ENCODE measurements at regions of chr14 and their contacts with region 1.

Region 1: GRCh38 chr14:103984196-103984595 is 41.9 kb upstream of the RD3L start:
- DNase-seq: no peak
- H3K4me3 ChIP-seq: no peak overlapping the region
- H3K27ac ChIP-seq: no peak overlapping the region
- H3K4me1 ChIP-seq: no peaks in the 10 kb centered on the region
- H3K27me3 ChIP-seq: peaks cover 0 to 3% (median 0%) of the 10 kb centered on the region in 5 experiments

Region 2: DNA sequence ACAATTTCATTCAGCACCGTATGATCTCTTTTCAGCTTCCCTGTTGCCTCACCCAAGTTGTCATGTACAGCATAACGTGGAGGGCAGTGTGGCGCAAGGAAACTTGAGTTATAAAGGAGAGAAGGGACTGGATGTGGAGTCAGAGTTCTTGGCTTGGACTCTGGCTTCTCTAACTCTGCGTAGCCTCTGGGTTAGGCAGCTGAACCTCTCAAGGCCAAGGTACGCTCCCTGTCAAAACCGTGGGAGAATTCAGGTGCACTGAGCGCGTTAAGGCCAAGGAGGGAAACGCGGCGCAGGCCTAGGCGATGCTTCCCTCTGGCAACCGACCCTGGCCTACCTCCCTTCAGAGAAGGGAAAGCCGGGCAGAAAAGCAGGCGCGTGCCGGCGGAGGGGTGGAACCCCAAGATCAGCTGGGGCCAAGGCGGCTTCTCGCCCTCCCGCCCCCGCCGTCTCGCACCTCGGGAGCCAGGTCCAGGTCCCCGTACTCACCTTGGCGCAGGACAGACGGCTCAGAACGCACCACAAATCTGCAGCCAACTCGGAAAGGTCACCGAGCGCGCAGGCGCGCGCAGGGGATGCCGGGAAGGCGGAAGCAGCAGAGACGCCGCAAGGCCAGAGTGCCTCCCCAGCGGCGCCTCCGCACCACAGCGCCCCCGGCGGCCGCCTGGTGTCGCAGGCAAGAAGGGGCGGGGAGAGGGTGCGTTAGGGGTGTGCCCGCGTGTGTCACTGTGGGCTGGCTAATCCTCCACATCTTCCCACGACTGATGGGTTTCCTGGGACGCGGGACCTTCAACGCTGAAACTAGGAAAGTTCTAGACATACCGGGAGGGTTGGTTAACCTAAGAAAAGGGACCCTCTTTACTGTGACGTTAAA is 63.0 kb before region 1 on chr14:
- CTCF ChIA-PET with region 1: interaction called, 19 read pairs
- POLR2A ChIA-PET with region 1: no interaction called
- DNase-seq: peak; percentile 91 to 95 (median 94)
- H3K4me3 ChIP-seq: peak overlapping the region; percentile 78 to 96 (median 85)
- H3K27ac ChIP-seq: peak overlapping the region; percentile 84 to 91
- H3K4me1 ChIP-seq: peaks cover 3 to 50% (median 29%) of the 10 kb centered on the region in 4 experiments
- H3K27me3 ChIP-seq: no peaks in the 10 kb centered on the region

Region 3: GRCh38 chr14:103994535-103995182 is 10.5 kb after region 1 on chr14:
- CTCF ChIA-PET with region 1: interaction called, 12 read pairs
- POLR2A ChIA-PET with region 1: no interaction called
- DNase-seq: no peak
- H3K4me3 ChIP-seq: no peak overlapping the region
- H3K27ac ChIP-seq: no peak overlapping the region
- H3K4me1 ChIP-seq: no peaks in the 10 kb centered on the region
- H3K27me3 ChIP-seq: no peaks in the 10 kb centered on the region